Calu3 (cell line): ENCODE measurements at regions of chr7 and their contacts with region 1.

Region 1: DNA sequence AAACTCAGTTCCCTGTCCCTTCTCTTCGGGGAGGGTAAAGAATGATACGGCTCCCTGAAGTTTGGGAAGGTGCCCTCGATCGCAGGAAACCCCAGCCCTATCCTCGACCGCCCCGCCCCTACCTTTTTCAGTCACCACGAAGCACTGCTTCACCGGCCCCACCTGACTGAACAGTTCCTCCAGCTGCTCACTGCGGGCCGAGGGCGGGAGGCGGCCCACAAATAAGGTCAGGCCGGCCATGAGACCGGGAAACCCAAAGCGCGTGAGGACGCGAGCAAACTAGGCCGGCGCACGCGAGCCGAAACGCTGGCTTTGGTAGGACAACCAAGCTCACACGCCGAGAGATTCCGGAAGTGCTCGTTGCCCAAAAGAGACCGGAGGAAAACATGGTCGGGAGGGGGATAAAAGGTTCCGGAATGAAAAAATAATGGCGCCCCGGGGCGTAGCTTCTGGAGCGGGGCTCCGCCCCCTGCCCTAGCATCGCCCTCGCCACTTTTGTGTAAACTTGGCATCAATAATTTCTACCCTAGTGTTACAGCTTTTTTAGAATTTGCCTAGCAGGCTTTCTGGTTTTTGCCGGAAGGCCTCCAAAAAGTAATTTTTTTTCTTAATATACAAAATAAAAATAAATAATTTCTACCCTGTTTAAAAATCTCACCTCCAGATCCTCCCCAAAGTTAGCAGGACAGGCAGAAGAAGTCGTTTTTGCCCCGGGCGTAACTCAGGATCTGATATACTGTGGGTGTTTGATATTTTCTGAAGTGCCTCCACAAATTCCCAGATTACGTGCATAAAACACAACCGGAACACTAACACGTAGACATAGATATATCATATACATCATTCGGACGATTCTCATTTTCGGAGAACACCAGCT is at the start of gene RBM28:
- DNase-seq: peak; percentile 86
- H3K4me3 Mint-ChIP-seq: peak within 1 kb of the TSS; percentile 66
- H3K27ac Mint-ChIP-seq: peak within 1 kb of the TSS; percentile 88
- H3K4me1 Mint-ChIP-seq: peaks cover 10% of the 10 kb centered on the region
- H3K27me3 Mint-ChIP-seq: peaks cover 19% of the 10 kb centered on the region
- CTCF ChIP-seq: no peak
- total RNA-seq, gene RBM28: 49.3 and 49.9 TPM in 2 replicates

Region 2: DNA sequence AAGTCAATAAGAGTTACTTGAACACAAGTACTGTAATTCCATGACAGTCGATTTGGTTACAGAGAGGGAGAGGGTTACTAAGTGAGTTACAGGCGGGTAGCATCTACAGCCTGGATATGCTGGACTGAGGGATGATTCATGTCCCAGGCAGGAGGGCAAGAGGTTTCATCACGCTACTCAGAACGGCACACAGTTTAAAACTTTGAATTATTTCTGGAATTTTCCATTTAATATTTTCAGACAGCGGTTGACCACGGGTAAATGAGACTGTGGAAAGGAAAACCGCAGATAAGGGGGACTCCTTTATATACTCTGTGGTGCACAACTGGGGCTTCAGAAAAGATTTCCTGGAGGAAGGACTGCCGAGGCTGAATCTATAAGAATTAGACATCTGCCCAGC is 286.9 kb before region 1 on chr7:
- CTCF ChIA-PET with region 1: no interaction called
- intact Hi-C with region 1: no loop called
- DNase-seq: no peak
- H3K4me3 Mint-ChIP-seq: no peak overlapping the region
- H3K27ac Mint-ChIP-seq: no peak overlapping the region
- H3K4me1 Mint-ChIP-seq: peaks cover 10% of the 10 kb centered on the region
- H3K27me3 Mint-ChIP-seq: no peaks in the 10 kb centered on the region
- CTCF ChIP-seq: no peak

Region 3: DNA sequence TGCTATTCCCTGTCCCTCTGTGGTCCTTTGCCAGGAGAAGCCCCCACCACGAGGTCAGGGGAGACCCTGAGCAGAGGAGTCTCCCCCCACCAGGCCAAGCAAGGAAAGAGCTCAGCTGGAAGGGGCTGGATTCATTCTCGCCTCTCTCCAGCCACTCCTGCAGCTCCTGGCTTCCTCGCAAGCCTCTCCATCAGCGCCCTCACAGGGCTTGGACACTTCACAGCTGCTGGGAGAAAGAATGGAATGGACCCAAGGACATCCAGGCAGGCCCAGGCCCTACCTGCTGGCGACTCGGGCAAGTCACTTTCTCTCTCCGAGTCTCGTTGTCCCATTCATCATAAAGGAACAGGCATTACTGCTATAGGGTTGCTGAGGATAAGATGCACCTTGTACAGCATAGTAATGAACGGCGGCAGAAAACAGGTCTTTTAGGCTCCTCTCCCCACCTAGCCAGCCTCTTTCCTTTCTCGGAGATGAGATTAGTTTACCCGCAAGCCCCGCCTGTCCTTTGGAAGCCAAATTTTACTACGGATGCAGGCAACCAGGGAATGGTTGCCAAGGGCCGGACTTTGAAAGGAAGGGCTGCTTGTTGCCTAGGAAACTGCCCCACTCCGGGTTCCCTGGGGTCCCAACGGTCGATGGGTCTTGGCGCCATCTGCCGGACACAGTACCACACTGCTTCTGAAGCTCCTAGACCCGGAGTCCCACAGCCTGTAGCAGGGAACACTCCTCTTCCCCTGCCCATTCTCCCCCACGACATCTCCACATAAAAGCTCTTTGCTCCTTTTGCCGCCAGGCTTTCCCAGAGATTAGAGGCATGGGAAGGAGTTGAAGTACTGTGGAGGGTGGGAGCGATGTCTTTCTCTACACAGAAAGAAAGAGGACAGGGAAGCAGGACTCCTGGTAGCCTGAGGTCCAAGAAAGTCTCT is 43.7 kb after region 1 on chr7:
- CTCF ChIA-PET with region 1: interaction called, 60 read pairs
- intact Hi-C with region 1: loop called (anchors 1 kb)
- DNase-seq: peak; percentile 80
- H3K4me3 Mint-ChIP-seq: no peak overlapping the region
- H3K27ac Mint-ChIP-seq: no peak overlapping the region
- H3K4me1 Mint-ChIP-seq: no peaks in the 10 kb centered on the region
- H3K27me3 Mint-ChIP-seq: peaks cover 28% of the 10 kb centered on the region
- CTCF ChIP-seq: peak; percentile 78